Dendritic cell treated with granulocyte-macrophage colony-stimulating factor and Interleukin-4, amounts not matched to agents 40 ng/mL and 50 ng/mL, for 4 days (primary cell): ENCODE measurements at regions of chr11 and their contacts with region 1.

Region 1: DNA sequence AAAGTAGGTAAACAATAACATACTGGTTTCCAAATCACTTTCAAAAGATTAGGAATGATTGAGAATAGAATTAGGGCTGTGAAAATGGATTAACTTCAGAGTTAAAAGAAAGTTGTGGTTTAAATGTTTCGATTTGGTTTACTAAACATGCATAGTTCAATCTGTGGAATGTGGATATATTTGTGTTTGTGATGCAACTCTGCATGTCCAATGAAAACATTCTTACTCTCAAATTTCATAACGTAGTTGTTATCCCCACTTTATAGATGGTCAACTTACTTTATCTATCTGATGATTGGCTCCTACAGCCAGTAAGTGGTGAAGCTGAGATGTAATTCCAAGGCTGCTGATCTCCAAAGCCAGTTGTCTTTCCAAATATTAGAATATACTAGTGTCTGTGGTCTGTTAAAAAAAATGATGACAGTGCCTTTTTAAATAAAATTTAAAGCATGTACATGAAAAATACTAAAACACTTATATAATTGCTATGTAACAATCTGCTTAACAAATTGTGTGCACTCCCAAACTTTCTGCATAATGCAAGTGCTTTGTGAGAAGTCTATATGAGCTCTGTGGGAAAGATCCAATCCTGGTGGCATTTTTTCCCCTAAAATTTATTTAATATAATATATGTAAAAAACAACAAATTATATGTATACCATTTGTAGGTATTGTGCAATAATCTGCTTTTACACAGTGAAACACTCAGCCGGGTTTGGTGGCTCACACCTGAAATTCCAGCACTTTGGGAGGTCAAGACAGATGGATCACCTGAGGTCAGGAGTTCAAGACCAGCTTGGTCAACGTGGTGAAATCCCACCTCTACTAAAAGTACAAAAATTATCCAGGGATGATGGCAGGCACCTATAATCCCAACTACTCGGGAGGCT is 9.7 kb upstream of the SIK3 start:
- H3K4me3 Mint-ChIP-seq: no peak overlapping the region
- H3K27ac Mint-ChIP-seq: no peak overlapping the region
- H3K4me1 Mint-ChIP-seq: peaks cover 4% of the 10 kb centered on the region
- H3K27me3 Mint-ChIP-seq: peaks cover 2% of the 10 kb centered on the region

Region 2: DNA sequence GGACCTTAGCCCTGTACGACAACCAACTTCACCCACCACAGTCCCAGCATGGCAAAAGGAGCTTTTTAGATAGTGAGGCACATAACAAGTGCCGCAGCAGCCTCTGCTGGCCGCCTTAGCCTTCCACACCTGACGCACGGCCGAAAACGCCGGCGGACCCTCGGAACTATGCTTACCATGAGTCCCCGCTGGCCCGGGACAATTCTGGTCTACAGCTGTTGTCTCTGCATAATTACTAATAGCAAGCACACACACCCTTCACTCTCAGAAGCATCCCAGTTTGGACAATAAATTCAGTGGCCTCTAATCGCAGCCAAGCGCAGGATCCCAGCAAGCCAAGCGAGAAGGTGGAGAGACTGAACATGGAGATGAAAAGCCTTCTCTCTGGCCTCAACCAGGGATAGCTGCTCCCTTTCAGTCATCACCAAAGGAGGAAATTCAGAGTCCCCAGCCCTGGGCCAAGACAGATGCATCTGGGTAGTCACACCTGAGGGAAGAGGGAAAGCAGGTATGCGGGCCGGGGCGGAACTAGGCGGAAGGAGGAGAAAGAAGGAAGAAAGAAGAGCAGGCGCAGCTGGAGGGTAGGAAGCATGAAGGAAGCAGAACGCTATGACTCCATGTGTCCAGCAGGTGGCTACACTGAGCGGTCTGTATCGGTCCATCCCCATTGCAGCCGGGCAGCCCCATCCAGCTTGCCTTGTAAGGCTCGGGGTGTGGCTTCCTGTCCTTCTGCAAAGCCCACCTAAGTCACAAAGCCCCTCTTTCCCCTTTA is 375.5 kb before region 1 on chr11:
- intact Hi-C with region 1: loop called (anchors 5 kb)
- H3K4me3 Mint-ChIP-seq: no peak overlapping the region
- H3K27ac Mint-ChIP-seq: no peak overlapping the region
- H3K4me1 Mint-ChIP-seq: peaks cover 21% of the 10 kb centered on the region
- H3K27me3 Mint-ChIP-seq: peaks cover 19% of the 10 kb centered on the region

Region 3: DNA sequence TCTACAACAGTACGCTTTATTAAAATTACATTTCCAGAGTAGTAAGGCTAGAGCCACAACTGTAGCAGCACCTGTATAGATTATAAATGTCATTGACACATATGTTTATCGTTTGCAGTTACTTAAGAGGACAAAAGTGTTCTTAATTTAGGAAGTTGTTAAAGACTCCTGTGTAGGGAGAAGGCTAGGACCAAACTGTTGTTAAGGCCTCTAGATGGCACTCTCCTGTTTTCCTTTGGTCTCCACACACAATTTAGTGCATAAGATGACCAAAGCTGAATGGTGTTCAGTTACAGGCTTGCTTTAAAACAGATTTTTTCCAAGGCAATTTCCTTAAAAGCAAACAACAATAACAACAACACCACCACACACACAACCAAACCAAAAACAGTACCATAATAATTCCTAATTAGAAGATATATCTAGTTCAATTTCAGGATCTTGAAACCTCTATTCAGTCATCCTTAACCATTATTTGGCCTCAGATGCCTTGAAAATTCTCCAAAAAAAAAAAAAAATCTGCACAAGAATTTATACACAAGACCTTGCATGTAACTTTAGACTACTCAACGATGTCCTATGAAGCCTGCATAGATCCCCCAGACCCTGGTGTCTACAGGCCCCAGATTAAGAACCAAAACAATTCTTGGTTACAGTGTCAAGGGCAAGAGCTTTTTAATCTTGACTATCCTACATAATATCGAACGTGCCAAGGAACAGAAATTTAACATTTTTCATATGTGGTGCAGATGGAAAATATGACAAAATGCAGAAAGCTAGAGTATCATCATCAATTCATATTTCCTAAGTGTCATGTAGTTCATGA is 227.9 kb before region 1 on chr11:
- intact Hi-C with region 1: loop called (anchors 1 kb)
- H3K4me3 Mint-ChIP-seq: no peak overlapping the region
- H3K27ac Mint-ChIP-seq: no peak overlapping the region
- H3K4me1 Mint-ChIP-seq: peaks cover 5% of the 10 kb centered on the region
- H3K27me3 Mint-ChIP-seq: no peaks in the 10 kb centered on the region

Region 4: DNA sequence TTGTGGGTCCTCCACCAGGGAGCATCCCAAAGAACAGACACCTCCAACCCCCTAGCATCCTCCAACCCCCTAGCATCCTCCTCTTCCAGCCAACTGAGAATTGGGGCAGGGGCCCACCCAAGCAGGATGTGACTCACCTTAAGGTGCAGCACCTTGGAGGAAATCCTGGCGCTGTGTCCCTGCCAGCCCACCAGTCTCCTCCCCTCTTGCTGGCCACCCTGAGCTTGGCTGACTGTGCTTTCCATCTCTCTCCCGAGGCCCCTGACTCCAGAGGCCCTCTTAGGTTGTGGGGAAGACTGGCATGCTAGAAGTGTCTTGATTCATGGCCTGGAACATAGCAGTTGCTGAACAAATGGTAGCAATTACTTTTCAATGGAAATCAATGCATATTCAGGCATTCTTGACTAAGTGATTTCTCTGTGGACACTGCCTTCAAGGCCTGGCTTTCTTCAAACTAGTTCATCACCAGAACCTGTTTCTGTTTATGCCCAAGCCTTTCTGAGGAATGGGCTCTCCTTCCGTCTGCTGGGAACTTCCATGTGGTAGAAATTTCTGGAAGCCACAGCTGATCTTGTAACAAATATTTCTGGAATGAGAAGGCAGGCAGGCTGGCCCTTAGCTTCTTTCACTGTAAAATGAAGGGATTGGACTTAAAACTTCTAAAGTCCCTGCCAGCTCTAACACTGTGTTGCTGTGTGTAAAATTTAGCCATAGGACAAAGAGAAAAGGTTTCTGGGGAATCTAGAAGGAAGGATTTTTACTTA is 280.2 kb after region 1 on chr11:
- intact Hi-C with region 1: no loop called
- H3K4me3 Mint-ChIP-seq: no peak overlapping the region
- H3K27ac Mint-ChIP-seq: no peak overlapping the region
- H3K4me1 Mint-ChIP-seq: no peaks in the 10 kb centered on the region
- H3K27me3 Mint-ChIP-seq: no peaks in the 10 kb centered on the region